Endothelial cell of umbilical vein (primary cell): ENCODE measurements at regions of chr15 and their contacts with region 1.

Region 1: GRCh38 chr15:45611305-45611704 is 23.5 kb upstream of the SQOR start:
- DNase-seq: peak; percentile 33
- H3K4me3 ChIP-seq: no peak overlapping the region
- H3K27ac ChIP-seq: no peak overlapping the region
- H3K4me1 ChIP-seq: peaks cover 8% of the 10 kb centered on the region
- H3K27me3 ChIP-seq: no peaks in the 10 kb centered on the region
- CTCF ChIP-seq: peak; percentile 20 to 24
- POLR2A ChIP-seq: no peak

Region 2: DNA sequence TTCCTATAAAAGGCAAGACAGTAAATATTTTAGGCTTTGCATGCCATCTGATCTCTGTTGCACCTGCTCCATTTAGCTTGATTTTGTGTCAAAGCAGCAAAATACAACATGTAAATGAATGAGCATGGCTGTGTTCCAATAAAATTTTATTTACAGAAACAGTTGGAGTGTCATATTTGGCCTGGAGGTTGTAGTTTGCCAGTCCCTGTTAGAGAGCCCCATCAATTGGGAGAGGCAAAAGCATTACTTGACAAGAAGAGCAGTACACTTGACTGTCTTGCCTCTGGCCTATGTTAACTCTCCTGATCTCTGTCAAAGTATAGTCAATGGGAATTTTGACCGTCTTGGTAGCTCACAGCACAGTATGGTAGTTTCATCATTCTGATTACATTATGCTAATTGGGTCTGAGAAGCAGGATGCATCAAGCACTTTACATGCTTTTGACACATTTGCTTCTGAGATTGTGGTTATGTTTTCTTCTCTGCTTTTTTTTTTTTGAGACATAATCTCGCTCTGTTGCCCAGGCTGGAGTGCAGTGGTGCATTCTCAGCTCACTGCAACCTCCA is 323.8 kb before region 1 on chr15:
- CTCF ChIA-PET with region 1: no interaction called
- POLR2A ChIA-PET with region 1: no interaction called
- dilution Hi-C with region 1: no loop called
- intact Hi-C with region 1: no loop called
- DNase-seq: no peak
- H3K4me3 ChIP-seq: no peak overlapping the region
- H3K27ac ChIP-seq: no peak overlapping the region
- H3K4me1 ChIP-seq: no peaks in the 10 kb centered on the region
- H3K27me3 ChIP-seq: peaks cover 2 to 5% of the 10 kb centered on the region in 2 experiments
- CTCF ChIP-seq: no peak
- POLR2A ChIP-seq: no peak

Region 3: GRCh38 chr15:45307230-45307924 is 303.9 kb before region 1 on chr15:
- CTCF ChIA-PET with region 1: no interaction called
- POLR2A ChIA-PET with region 1: no interaction called
- dilution Hi-C with region 1: no loop called
- intact Hi-C with region 1: loop called (anchors 5 kb)
- DNase-seq: peak; percentile 41
- H3K4me3 ChIP-seq: no peak overlapping the region
- H3K27ac ChIP-seq: no peak overlapping the region
- H3K4me1 ChIP-seq: no peaks in the 10 kb centered on the region
- H3K27me3 ChIP-seq: peaks cover 2 to 5% of the 10 kb centered on the region in 2 experiments
- CTCF ChIP-seq: peak; percentile 10 to 15
- POLR2A ChIP-seq: no peak

Region 4: DNA sequence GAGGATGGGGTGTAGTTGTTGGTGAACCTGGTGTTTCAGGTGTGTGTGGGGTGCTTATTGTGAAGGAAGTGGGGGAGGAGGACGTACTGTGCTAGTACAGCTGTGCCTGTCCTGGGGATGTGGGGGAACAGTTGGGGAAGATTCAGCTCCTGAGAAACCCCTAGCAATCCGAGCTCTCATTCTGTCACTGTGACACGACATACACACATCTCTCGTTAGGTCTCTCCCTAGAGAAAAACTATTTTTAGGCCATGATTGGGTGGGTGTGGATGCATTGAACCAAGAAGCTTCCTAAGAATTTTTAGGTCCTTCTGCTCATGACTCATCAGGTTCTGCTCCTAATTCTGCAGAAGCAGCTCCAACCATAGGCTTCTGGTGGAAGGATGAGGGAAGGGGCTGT is 143.0 kb before region 1 on chr15:
- CTCF ChIA-PET with region 1: interaction called, 12 read pairs
- POLR2A ChIA-PET with region 1: no interaction called
- dilution Hi-C with region 1: no loop called
- intact Hi-C with region 1: no loop called
- DNase-seq: no peak
- H3K4me3 ChIP-seq: no peak overlapping the region
- H3K27ac ChIP-seq: no peak overlapping the region
- H3K4me1 ChIP-seq: no peaks in the 10 kb centered on the region
- H3K27me3 ChIP-seq: peaks cover 10 to 18% of the 10 kb centered on the region in 2 experiments
- CTCF ChIP-seq: no peak
- POLR2A ChIP-seq: no peak

Region 5: GRCh38 chr15:45522328-45523160 is 88.8 kb before region 1 on chr15 and contains the start of gene SLC30A4:
- CTCF ChIA-PET with region 1: interaction called, 3 read pairs
- POLR2A ChIA-PET with region 1: no interaction called
- dilution Hi-C with region 1: no loop called
- intact Hi-C with region 1: loop called (anchors 2 kb)
- DNase-seq: peak; percentile 68
- H3K4me3 ChIP-seq: peak within 1 kb of the TSS; percentile 53 to 90 (median 60)
- H3K27ac ChIP-seq: no peak within 1 kb of the TSS
- H3K4me1 ChIP-seq: peaks cover 9% of the 10 kb centered on the region
- H3K27me3 ChIP-seq: peaks cover 0 to 3% of the 10 kb centered on the region in 2 experiments
- CTCF ChIP-seq: peak; percentile 12 to 49
- POLR2A ChIP-seq: no peak
- total RNA-seq, gene SLC30A4: 3.8 and 3.9 TPM in 2 replicates

Region 6: DNA sequence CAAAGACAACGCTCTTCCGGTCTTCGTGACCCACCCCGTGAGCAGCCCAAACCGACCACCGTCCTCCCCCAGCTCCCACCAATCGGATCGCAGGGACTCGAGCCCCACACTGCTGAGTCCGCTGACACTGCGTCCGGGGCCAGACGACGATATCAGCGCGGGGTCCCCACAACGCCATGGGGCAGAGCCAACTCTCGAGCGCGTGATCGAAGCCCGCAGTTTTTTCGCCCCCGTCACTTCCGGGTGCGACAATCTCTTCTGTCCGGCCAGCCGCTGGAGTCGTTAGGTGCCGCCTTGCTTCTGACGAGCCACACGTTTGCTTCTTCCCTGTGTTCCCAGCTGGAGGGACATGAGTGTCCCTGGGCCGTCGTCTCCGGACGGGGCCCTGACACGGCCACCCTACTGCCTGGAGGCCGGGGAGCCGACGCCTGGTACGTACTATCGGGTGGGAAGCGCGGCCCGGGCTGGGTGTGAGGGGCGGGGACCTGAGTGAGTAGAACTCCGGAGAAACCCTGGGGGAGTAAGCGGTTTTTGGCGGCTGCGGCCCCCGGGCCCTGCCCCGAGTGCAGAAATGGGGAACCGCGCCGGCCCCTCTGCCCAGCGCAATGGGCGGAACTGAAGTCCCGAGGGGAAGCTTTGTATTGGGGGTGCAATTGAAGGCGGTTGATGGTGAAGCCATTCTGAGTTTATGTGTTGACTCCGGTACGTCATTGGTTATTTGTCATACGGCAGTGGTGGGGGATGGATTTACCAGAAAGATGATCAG is 24.0 kb before region 1 on chr15 and contains the start of gene BLOC1S6:
- CTCF ChIA-PET with region 1: interaction called, 47 read pairs
- POLR2A ChIA-PET with region 1: no interaction called
- dilution Hi-C with region 1: no loop called
- intact Hi-C with region 1: loop called (anchors 2 kb)
- DNase-seq: peak; percentile 92
- H3K4me3 ChIP-seq: peak within 1 kb of the TSS; percentile 89 to 98 (median 90)
- H3K27ac ChIP-seq: peak within 1 kb of the TSS; percentile 83
- H3K4me1 ChIP-seq: peaks cover 29% of the 10 kb centered on the region
- H3K27me3 ChIP-seq: peaks cover 0 to 2% of the 10 kb centered on the region in 2 experiments
- CTCF ChIP-seq: no peak
- POLR2A ChIP-seq: peak; percentile 89
- total RNA-seq, gene BLOC1S6: 39.2 and 43.4 TPM in 2 replicates

Region 7: DNA sequence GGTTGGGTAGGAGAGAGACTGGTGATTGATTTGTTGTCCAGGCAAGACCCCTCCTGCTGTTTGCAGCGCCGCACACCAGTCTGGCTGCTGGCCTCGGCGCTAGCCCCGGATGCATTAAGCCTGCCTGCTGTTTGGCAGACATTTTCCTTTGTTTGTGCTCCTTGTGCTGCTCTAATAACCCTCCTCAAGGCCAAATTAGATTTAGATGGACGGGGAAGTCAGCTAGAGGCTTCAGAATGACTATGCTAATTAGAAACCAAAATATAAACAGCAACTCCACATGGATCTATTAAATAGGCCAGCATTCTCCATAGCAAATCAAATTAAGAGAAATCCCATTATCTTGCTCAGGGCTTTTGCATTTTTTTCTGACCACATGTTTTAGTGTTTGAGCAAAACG is 468.7 kb after region 1 on chr15:
- CTCF ChIA-PET with region 1: no interaction called
- POLR2A ChIA-PET with region 1: no interaction called
- dilution Hi-C with region 1: no loop called
- intact Hi-C with region 1: loop called (anchors 10 kb)
- DNase-seq: no peak
- H3K4me3 ChIP-seq: no peak overlapping the region
- H3K27ac ChIP-seq: no peak overlapping the region
- H3K4me1 ChIP-seq: no peaks in the 10 kb centered on the region
- H3K27me3 ChIP-seq: no peaks in the 10 kb centered on the region
- CTCF ChIP-seq: no peak
- POLR2A ChIP-seq: no peak